ENCODE measurements at regions of chr10 and their contacts with region 1.

Region 1: GRCh38 chr10:72173635-72174296 is 42.0 kb upstream of the ANAPC16 start:
- DNase-seq: peak; percentile 92
- ATAC-seq: peak; percentile 91
- H3K4me3 ChIP-seq: peak overlapping the region in 1 of 2 experiments; percentile 12; a peak in 1 of 4 replicates
- H3K27ac ChIP-seq: peak overlapping the region; percentile 100
- H3K4me1 ChIP-seq: peaks cover 88% of the 10 kb centered on the region
- H3K27me3 ChIP-seq: no peaks in the 10 kb centered on the region
- CTCF ChIP-seq: peak; percentile 52; the same call in 1 of the 2 replicates

Region 2: DNA sequence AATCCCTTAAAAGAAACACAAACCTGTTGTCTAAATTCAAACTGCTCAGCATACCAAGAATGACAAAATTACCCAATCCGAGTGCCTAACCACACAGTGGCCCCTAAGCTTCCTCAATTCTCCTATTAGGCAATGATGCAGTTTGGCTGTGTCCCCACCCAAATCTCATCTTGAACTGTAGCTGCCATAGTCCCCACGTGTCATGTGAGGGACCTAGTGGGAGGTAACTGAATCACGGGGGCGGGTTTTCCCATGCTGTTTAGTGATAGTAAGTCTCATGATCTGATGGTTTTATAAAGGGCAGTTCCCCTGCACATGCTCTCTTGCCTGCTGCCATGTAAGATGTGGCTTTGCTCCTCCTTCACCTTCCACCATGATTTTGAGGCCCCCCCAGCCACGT is 344.6 kb before region 1 on chr10:
- CTCF ChIA-PET with region 1: no interaction called
- POLR2A ChIA-PET with region 1: interaction called, 10 read pairs
- in situ Hi-C with region 1: no loop called
- intact Hi-C with region 1: no loop called
- DNase-seq: no peak
- ATAC-seq: no peak
- H3K4me3 ChIP-seq: no peak overlapping the region
- H3K27ac ChIP-seq: peak overlapping the region; percentile 5; the same call in 1 of the 2 replicates
- H3K4me1 ChIP-seq: peaks cover 17% of the 10 kb centered on the region
- H3K27me3 ChIP-seq: no peaks in the 10 kb centered on the region
- CTCF ChIP-seq: no peak

Region 3: DNA sequence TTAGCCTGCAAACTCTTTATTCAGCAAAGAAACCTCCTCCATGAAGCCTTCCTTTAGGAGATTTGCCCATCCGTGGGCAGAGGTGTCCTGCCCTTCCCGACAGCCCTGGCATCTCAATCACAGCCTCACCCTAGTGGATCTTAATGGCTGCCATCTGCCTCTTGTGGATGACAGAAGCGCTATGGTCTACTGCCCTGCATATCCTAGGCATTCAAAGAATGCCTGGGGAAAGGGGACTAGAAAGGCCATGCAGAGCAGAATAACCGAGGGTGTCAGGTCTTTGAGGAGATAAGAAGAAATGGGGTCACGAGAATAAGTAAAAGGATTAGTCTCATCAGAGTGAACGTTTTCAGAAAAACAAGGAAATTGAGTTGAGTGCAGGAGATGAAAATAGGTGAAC is 27.7 kb before region 1 on chr10:
- CTCF ChIA-PET with region 1: interaction called, 4 read pairs
- POLR2A ChIA-PET with region 1: interaction called, 12 read pairs
- in situ Hi-C with region 1: no loop called
- intact Hi-C with region 1: no loop called
- DNase-seq: no peak
- ATAC-seq: peak; percentile 66
- H3K4me3 ChIP-seq: no peak overlapping the region
- H3K27ac ChIP-seq: peak overlapping the region; percentile 75
- H3K4me1 ChIP-seq: peaks cover 22% of the 10 kb centered on the region
- H3K27me3 ChIP-seq: no peaks in the 10 kb centered on the region
- CTCF ChIP-seq: no peak

Region 4: GRCh38 chr10:72215652-72216549 is 42.1 kb after region 1 on chr10 and contains the starts of genes ANAPC16 and ASCC1:
- CTCF ChIA-PET with region 1: no interaction called
- POLR2A ChIA-PET with region 1: interaction called, 8 read pairs
- in situ Hi-C with region 1: no loop called
- intact Hi-C with region 1: loop called (anchors 5 kb)
- DNase-seq: peak; percentile 89
- ATAC-seq: peak; percentile 95
- H3K4me3 ChIP-seq: peak within 1 kb of the TSS; percentile 68 to 76
- H3K27ac ChIP-seq: peak within 1 kb of the TSS; percentile 99
- H3K4me1 ChIP-seq: peaks cover 31% of the 10 kb centered on the region
- H3K27me3 ChIP-seq: no peaks in the 10 kb centered on the region
- CTCF ChIP-seq: no peak
- total RNA-seq, gene ANAPC16: 110 TPM
- total RNA-seq, gene ASCC1: 114 TPM

Region 5: GRCh38 chr10:72375585-72375984 is 201.8 kb after region 1 on chr10:
- CTCF ChIA-PET with region 1: interaction called, 16 read pairs
- POLR2A ChIA-PET with region 1: no interaction called
- in situ Hi-C with region 1: no loop called
- intact Hi-C with region 1: no loop called
- DNase-seq: no peak
- ATAC-seq: peak; percentile 92
- H3K4me3 ChIP-seq: no peak overlapping the region
- H3K27ac ChIP-seq: no peak overlapping the region
- H3K4me1 ChIP-seq: no peaks in the 10 kb centered on the region
- H3K27me3 ChIP-seq: no peaks in the 10 kb centered on the region
- CTCF ChIP-seq: peak; percentile 64

Region 6: GRCh38 chr10:72426986-72427385 is 253.2 kb after region 1 on chr10:
- CTCF ChIA-PET with region 1: no interaction called
- POLR2A ChIA-PET with region 1: no interaction called
- in situ Hi-C with region 1: no loop called
- intact Hi-C with region 1: no loop called
- DNase-seq: no peak
- ATAC-seq: no peak
- H3K4me3 ChIP-seq: no peak overlapping the region
- H3K27ac ChIP-seq: no peak overlapping the region
- H3K4me1 ChIP-seq: no peaks in the 10 kb centered on the region
- H3K27me3 ChIP-seq: no peaks in the 10 kb centered on the region
- CTCF ChIP-seq: no peak

Measured in Panc1 (cell line).